Spleen (tissue), 13 donors: ENCODE measurements at regions of chr2 and their contacts with region 1.

Region 1: DNA sequence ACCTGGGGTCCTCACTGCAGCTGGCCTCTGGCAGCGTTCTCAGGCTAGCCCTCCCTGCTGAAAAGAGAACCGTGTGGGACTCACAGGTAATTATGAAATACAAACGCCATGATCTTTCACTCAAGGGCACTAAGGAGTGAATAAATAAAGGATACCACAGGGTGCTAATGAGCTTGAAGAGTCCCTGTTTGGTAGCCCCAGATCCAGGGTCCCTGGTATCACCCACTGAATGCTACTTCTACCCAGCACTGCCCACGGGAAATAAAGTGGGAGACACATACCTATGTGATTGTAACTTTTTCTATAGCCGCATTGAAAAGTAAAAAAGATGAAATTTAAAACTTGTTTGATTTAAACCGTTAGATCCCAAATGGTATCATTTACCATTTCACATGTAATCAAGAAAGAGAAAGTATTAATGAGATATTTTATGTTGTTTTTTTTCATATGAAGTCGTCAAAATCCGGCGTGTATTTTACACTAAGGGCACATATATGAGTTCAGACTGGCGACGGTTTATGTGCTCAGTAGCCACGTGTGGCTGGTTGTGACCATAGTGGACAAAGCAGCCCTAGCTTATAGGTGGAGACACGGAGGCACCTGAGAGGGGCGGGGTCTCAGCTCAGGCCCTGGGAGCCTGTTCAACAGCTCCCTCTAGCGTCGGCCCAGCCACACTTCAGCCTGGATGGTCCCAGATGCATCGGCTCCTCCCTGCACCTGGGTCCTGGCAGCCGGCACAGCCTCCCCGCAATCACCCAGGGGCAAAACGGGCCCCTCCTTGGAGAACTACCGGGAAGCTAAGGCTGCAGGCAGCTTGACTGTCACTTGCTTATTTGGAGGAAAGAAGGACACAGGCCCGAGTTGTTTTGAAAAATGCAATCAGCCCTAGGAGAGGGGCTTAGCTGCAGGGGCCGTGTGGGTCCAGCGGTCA is 39.2 kb downstream of the ODC1 start:
- DNase-seq: peak; percentile 96
- H3K4me3 ChIP-seq: peak overlapping the region in 5 of 8 donors; percentile 2 to 55 (median 14)
- H3K27ac ChIP-seq: peak overlapping the region; percentile 55 to 94 (median 88)
- H3K4me1 ChIP-seq: peaks cover 32 to 100% (median 59%) of the 10 kb centered on the region in 6 donors
- H3K27me3 ChIP-seq: peaks cover 0 to 5% (median 0%) of the 10 kb centered on the region in 7 donors
- CTCF ChIP-seq: peak; percentile 93 to 99 (median 97)
- POLR2A ChIP-seq: no peak

Region 2: GRCh38 chr2:10122386-10123280 is 286.3 kb before region 1 on chr2 and contains the start of gene RRM2:
- intact Hi-C with region 1: loop called (anchors 10 kb)
- DNase-seq: peak; percentile 94
- H3K4me3 ChIP-seq: peak within 1 kb of the TSS; percentile 30 to 79 (median 62)
- H3K27ac ChIP-seq: peak within 1 kb of the TSS in 5 of 8 donors; percentile 36 to 89 (median 43)
- H3K4me1 ChIP-seq: peaks cover 34 to 95% (median 60%) of the 10 kb centered on the region in 6 donors
- H3K27me3 ChIP-seq: peaks cover 3 to 31% (median 23%) of the 10 kb centered on the region in 7 donors
- CTCF ChIP-seq: peak in 2 of 11 experiments; percentile 37 to 63
- POLR2A ChIP-seq: no peak
- total RNA-seq, gene RRM2: 6.3 to 39.2 (median 14.3) TPM

Region 3: DNA sequence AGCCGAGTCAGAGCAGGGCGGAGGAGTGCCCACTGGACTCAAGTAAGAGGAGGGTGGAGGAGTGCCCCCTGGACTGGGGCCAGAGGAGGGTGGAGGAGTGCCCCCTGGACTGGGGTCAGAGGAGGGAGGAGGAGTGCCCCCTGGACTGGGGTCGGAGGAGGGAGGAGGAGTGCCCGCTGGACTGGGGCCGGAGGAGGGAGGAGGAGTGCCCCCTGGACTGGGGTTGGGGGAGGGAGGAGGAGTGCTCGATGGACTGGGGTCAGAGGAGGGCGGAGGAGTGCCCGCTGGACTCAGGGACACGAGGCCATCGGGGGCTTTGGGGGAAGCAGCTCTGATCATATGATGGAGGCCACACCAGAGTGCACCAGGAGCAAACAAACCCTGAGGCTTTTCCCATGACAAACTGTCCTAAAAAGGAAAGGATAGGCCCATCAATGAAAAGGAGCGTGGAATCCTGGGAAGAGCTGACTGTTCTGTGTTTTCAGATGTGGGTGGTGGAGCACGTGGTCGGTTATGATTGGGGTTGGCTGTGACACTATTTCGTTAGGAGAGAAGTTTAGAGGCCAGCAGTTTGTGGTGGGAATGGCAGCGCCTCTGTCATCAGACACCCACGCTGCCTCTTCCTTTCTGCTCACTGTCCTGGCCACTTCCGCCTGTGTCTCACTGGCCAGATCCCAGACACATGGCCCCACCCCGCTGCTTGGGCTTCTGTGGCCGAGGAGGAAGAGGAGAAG is 130.7 kb before region 1 on chr2:
- intact Hi-C with region 1: loop called (anchors 10 kb)
- DNase-seq: peak; percentile 87
- H3K4me3 ChIP-seq: no peak overlapping the region
- H3K27ac ChIP-seq: peak overlapping the region; percentile 6 to 81 (median 67)
- H3K4me1 ChIP-seq: peaks cover 0 to 38% (median 15%) of the 10 kb centered on the region in 6 donors
- H3K27me3 ChIP-seq: peaks cover 0 to 13% (median 0%) of the 10 kb centered on the region in 7 donors
- CTCF ChIP-seq: no peak
- POLR2A ChIP-seq: no peak

Region 4: GRCh38 chr2:10302479-10303180 is 106.3 kb before region 1 on chr2 and contains the start of gene HPCAL1:
- intact Hi-C with region 1: loop called (anchors 10 kb)
- DNase-seq: peak; percentile 99
- H3K4me3 ChIP-seq: peak within 1 kb of the TSS; percentile 88 to 99 (median 94)
- H3K27ac ChIP-seq: peak within 1 kb of the TSS; percentile 77 to 96 (median 90)
- H3K4me1 ChIP-seq: peaks cover 37 to 88% (median 64%) of the 10 kb centered on the region in 6 donors
- H3K27me3 ChIP-seq: peaks cover 0 to 17% (median 0%) of the 10 kb centered on the region in 7 donors
- CTCF ChIP-seq: peak; percentile 32 to 92 (median 81)
- POLR2A ChIP-seq: peak in 2 of 3 donors; percentile 53 to 83
- total RNA-seq, gene HPCAL1: 42.3 to 80.6 (median 57.5) TPM

Region 5: DNA sequence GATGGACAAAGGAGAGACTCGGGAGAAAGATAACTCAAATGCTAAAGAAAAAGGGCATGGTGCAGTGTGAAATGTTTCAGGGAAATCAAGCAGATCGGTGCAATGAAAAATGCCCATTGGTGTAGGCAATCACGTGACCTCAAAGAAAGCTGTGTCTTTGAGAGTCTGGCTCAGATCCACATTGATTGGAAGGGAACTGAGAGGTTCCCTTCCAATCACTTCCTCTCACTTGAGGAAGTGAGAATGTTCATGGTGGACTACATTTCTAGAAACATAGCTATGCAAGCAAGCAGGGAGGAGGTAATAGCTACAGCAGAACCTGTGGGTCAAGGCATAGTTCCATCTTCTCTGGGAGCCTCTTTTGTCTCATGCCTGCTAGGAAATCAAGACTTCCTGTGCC is 1524.9 kb after region 1 on chr2:
- intact Hi-C with region 1: no loop called
- DNase-seq: no peak
- H3K4me3 ChIP-seq: no peak overlapping the region
- H3K27ac ChIP-seq: no peak overlapping the region
- H3K4me1 ChIP-seq: peaks cover 0 to 17% (median 10%) of the 10 kb centered on the region in 6 donors
- H3K27me3 ChIP-seq: no peaks in the 10 kb centered on the region
- CTCF ChIP-seq: no peak
- POLR2A ChIP-seq: no peak